CD14-positive monocyte (primary cell): ENCODE measurements at regions of chr15 and their contacts with region 1.

Region 1: GRCh38 chr15:41331833-41332787 is at the start of gene OIP5:
- DNase-seq: peak; percentile 99 to 100 (median 99)
- H3K4me3 ChIP-seq: peak within 1 kb of the TSS; percentile 81 to 94 (median 81)
- H3K4me3 Mint-ChIP-seq: peak within 1 kb of the TSS; percentile 98 to 100
- H3K27ac ChIP-seq: peak within 1 kb of the TSS; percentile 59 to 79
- H3K27ac Mint-ChIP-seq: peak within 1 kb of the TSS; percentile 90 to 98 (median 95)
- H3K4me1 ChIP-seq: peaks cover 17 to 29% of the 10 kb centered on the region in 2 donors
- H3K4me1 Mint-ChIP-seq: peaks cover 32% of the 10 kb centered on the region
- H3K27me3 ChIP-seq: no peaks in the 10 kb centered on the region
- H3K27me3 Mint-ChIP-seq: peaks cover 0 to under 1% (median 0%) of the 10 kb centered on the region in 3 donors
- CTCF ChIP-seq: peak; percentile 79
- polyA plus RNA-seq, gene OIP5: 0.05 to 0.28 (median 0.22) TPM

Region 2: GRCh38 chr15:41230650-41231533 is 101.2 kb before region 1 on chr15 and contains the starts of genes CHP1 and EXD1:
- intact Hi-C with region 1: loop called in 1 of 2 experiments (anchors 5 kb)
- DNase-seq: peak; percentile 96 to 98 (median 96)
- H3K4me3 ChIP-seq: peak within 1 kb of the TSS; percentile 80 to 96 (median 94)
- H3K4me3 Mint-ChIP-seq: peak within 1 kb of the TSS; percentile 91 to 94
- H3K27ac ChIP-seq: peak within 1 kb of the TSS; percentile 80 to 99
- H3K27ac Mint-ChIP-seq: peak within 1 kb of the TSS; percentile 93 to 99 (median 96)
- H3K4me1 ChIP-seq: peaks cover 23 to 29% of the 10 kb centered on the region in 2 donors
- H3K4me1 Mint-ChIP-seq: peaks cover 30% of the 10 kb centered on the region
- H3K27me3 ChIP-seq: no peaks in the 10 kb centered on the region
- H3K27me3 Mint-ChIP-seq: peaks cover 2 to 5% (median 5%) of the 10 kb centered on the region in 3 donors
- CTCF ChIP-seq: peak; percentile 100
- polyA plus RNA-seq, gene CHP1: 57.2 to 67.2 (median 58.8) TPM
- polyA plus RNA-seq, gene EXD1: 0.04 to 0.08 TPM in 2 of 3 donors, not detected in the other

Region 3: DNA sequence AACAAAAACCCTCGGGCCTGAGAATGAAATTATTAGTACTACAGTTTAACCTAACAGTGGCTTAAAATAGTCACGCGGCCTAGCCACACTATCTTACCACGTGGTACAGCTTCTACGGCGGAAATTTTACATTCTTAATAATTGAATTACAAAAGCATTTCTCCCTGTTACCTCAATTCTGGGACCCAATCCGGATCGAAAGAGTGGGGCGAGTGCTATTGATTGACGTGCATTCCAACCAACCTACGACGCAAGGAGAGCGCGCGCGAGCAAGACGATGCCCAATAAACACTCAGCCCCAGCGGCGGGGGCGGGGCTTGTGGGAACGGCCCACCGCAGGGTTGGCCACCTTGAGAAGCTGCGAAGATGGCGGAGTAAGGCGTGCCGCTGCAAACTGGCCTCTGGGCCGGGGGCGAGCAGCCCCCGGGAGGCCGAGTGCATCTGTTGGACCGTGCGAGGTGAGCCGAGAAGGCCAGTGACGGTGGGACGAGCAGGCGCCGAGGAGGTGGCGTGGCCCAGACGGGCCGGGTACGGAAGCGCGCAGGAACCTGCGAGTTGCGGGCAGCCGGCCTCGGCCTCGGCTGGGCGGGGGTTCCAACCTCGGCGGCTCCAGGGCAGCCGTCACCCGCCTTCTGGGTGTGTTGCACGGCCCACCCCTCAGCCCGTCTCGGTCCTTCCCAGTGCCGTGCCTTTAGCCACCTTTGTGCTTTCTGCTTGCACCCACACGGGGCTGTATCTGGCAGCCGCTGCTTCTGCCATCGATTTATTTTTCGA is 48.3 kb before region 1 on chr15:
- intact Hi-C with region 1: loop called in 1 of 2 experiments (anchors 5 kb)
- DNase-seq: peak; percentile 98 to 99 (median 99)
- H3K4me3 ChIP-seq: peak overlapping the region; percentile 64 to 91 (median 84)
- H3K4me3 Mint-ChIP-seq: peak overlapping the region; percentile 92 to 93
- H3K27ac ChIP-seq: peak overlapping the region; percentile 76 to 91
- H3K27ac Mint-ChIP-seq: peak overlapping the region; percentile 93 to 99 (median 95)
- H3K4me1 ChIP-seq: peaks cover 30 to 38% of the 10 kb centered on the region in 2 donors
- H3K4me1 Mint-ChIP-seq: peaks cover 37% of the 10 kb centered on the region
- H3K27me3 ChIP-seq: no peaks in the 10 kb centered on the region
- H3K27me3 Mint-ChIP-seq: peaks cover 0 to 2% (median 0%) of the 10 kb centered on the region in 3 donors
- CTCF ChIP-seq: no peak

Region 4: GRCh38 chr15:41291065-41291631 is 41.0 kb before region 1 on chr15:
- intact Hi-C with region 1: loop called (anchors 5 kb)
- DNase-seq: peak; percentile 84 to 92 (median 91)
- H3K4me3 ChIP-seq: peak overlapping the region in 1 of 3 experiments; percentile 26
- H3K4me3 Mint-ChIP-seq: peak overlapping the region; percentile 37 to 39
- H3K27ac ChIP-seq: peak overlapping the region; percentile 85 to 93
- H3K27ac Mint-ChIP-seq: peak overlapping the region; percentile 92 to 98 (median 97)
- H3K4me1 ChIP-seq: peaks cover 36 to 43% of the 10 kb centered on the region in 2 donors
- H3K4me1 Mint-ChIP-seq: peaks cover 33% of the 10 kb centered on the region
- H3K27me3 ChIP-seq: no peaks in the 10 kb centered on the region
- H3K27me3 Mint-ChIP-seq: peaks cover 0 to 2% (median 0%) of the 10 kb centered on the region in 3 donors
- CTCF ChIP-seq: no peak

Region 5: DNA sequence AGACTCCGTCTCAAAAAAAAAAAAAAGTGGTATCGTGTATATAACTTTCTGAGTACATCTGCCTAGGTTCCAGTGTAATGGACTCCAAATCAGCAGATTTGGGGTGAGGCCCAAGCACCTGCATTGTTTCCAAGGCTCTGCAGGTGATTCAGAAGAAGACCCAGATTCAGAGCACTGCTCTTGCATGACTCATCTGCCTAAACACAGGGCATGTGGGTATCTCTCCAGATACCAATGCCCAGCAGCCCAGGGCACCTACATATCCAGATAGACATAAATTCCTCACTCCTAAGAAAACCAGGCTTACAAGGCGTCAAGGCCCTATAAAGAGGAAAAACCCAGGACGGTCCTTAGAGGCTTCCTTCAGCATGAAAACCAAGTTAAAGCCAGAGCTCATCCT is 45.9 kb after region 1 on chr15:
- intact Hi-C with region 1: no loop called
- DNase-seq: no peak
- H3K4me3 ChIP-seq: no peak overlapping the region
- H3K4me3 Mint-ChIP-seq: no peak overlapping the region
- H3K27ac ChIP-seq: no peak overlapping the region
- H3K27ac Mint-ChIP-seq: peak overlapping the region in 4 of 7 donors; percentile 32 to 66 (median 44)
- H3K4me1 ChIP-seq: peaks cover 9 to 20% of the 10 kb centered on the region in 2 donors
- H3K4me1 Mint-ChIP-seq: peaks cover 11% of the 10 kb centered on the region
- H3K27me3 ChIP-seq: no peaks in the 10 kb centered on the region
- H3K27me3 Mint-ChIP-seq: peaks cover 0 to 2% (median 2%) of the 10 kb centered on the region in 3 donors
- CTCF ChIP-seq: no peak

Region 6: GRCh38 chr15:41416742-41417406 is 84.8 kb after region 1 on chr15 and contains the start of gene RTF1:
- intact Hi-C with region 1: loop called (anchors 5 kb)
- DNase-seq: peak; percentile 88 to 91 (median 89)
- H3K4me3 ChIP-seq: peak within 1 kb of the TSS; percentile 74 to 98 (median 91)
- H3K4me3 Mint-ChIP-seq: peak within 1 kb of the TSS; percentile 99 to 100
- H3K27ac ChIP-seq: peak within 1 kb of the TSS; percentile 81 to 93
- H3K27ac Mint-ChIP-seq: peak within 1 kb of the TSS; percentile 92 to 97 (median 96)
- H3K4me1 ChIP-seq: peaks cover 20 to 34% of the 10 kb centered on the region in 2 donors
- H3K4me1 Mint-ChIP-seq: peaks cover 30% of the 10 kb centered on the region
- H3K27me3 ChIP-seq: no peaks in the 10 kb centered on the region
- H3K27me3 Mint-ChIP-seq: peaks cover 0 to 2% (median 0%) of the 10 kb centered on the region in 3 donors
- CTCF ChIP-seq: no peak
- polyA plus RNA-seq, gene RTF1: 11.2 to 19.1 (median 15.0) TPM